B cell (primary cell): ENCODE measurements at regions of chr6 and their contacts with region 1.

Region 1: GRCh38 chr6:90186637-90187371 is 109.8 kb downstream of the BACH2 start:
- DNase-seq: peak; percentile 66
- ATAC-seq: peak; percentile 58
- H3K4me3 ChIP-seq: peak overlapping the region; percentile 6 to 59 (median 24)
- H3K4me3 Mint-ChIP-seq: peak overlapping the region; percentile 84
- H3K27ac ChIP-seq: peak overlapping the region; percentile 79 to 90
- H3K27ac Mint-ChIP-seq: peak overlapping the region; percentile 96
- H3K4me1 ChIP-seq: peaks cover 72 to 75% of the 10 kb centered on the region in 2 donors
- H3K4me1 Mint-ChIP-seq: peaks cover 88% of the 10 kb centered on the region
- H3K27me3 ChIP-seq: no peaks in the 10 kb centered on the region
- H3K27me3 Mint-ChIP-seq: no peaks in the 10 kb centered on the region
- CTCF ChIP-seq: no peak

Region 2: GRCh38 chr6:90173262-90173925 is 13.4 kb before region 1 on chr6:
- CTCF ChIA-PET with region 1: interaction called, 4 read pairs
- POLR2A ChIA-PET with region 1: interaction called, 3 read pairs
- intact Hi-C with region 1: loop called (anchors 2 kb)
- DNase-seq: peak; percentile 42
- ATAC-seq: no peak
- H3K4me3 ChIP-seq: no peak overlapping the region
- H3K4me3 Mint-ChIP-seq: peak overlapping the region; percentile 62
- H3K27ac ChIP-seq: peak overlapping the region in 1 of 2 donors; percentile 91
- H3K27ac Mint-ChIP-seq: peak overlapping the region; percentile 50
- H3K4me1 ChIP-seq: peaks cover 40 to 64% of the 10 kb centered on the region in 2 donors
- H3K4me1 Mint-ChIP-seq: peaks cover 71% of the 10 kb centered on the region
- H3K27me3 ChIP-seq: no peaks in the 10 kb centered on the region
- H3K27me3 Mint-ChIP-seq: no peaks in the 10 kb centered on the region
- CTCF ChIP-seq: no peak

Region 3: GRCh38 chr6:90226257-90226656 is 39.5 kb after region 1 on chr6:
- CTCF ChIA-PET with region 1: no interaction called
- POLR2A ChIA-PET with region 1: no interaction called
- intact Hi-C with region 1: no loop called
- DNase-seq: no peak
- ATAC-seq: no peak
- H3K4me3 ChIP-seq: no peak overlapping the region
- H3K4me3 Mint-ChIP-seq: no peak overlapping the region
- H3K27ac ChIP-seq: peak overlapping the region in 1 of 2 donors; percentile 41
- H3K27ac Mint-ChIP-seq: no peak overlapping the region
- H3K4me1 ChIP-seq: peaks cover 11 to 15% of the 10 kb centered on the region in 2 donors
- H3K4me1 Mint-ChIP-seq: peaks cover 56% of the 10 kb centered on the region
- H3K27me3 ChIP-seq: no peaks in the 10 kb centered on the region
- H3K27me3 Mint-ChIP-seq: no peaks in the 10 kb centered on the region
- CTCF ChIP-seq: no peak

Region 4: GRCh38 chr6:90251295-90251992 is 64.6 kb after region 1 on chr6:
- CTCF ChIA-PET with region 1: no interaction called
- POLR2A ChIA-PET with region 1: no interaction called
- intact Hi-C with region 1: no loop called
- DNase-seq: peak; percentile 66
- ATAC-seq: peak; percentile 47
- H3K4me3 ChIP-seq: no peak overlapping the region
- H3K4me3 Mint-ChIP-seq: peak overlapping the region; percentile 3
- H3K27ac ChIP-seq: peak overlapping the region; percentile 25 to 80
- H3K27ac Mint-ChIP-seq: peak overlapping the region; percentile 22
- H3K4me1 ChIP-seq: peaks cover 33 to 47% of the 10 kb centered on the region in 2 donors
- H3K4me1 Mint-ChIP-seq: peaks cover 63% of the 10 kb centered on the region
- H3K27me3 ChIP-seq: no peaks in the 10 kb centered on the region
- H3K27me3 Mint-ChIP-seq: no peaks in the 10 kb centered on the region
- CTCF ChIP-seq: no peak